ENCODE measurements at regions of chr16 and their contacts with region 1.

Region 1: DNA sequence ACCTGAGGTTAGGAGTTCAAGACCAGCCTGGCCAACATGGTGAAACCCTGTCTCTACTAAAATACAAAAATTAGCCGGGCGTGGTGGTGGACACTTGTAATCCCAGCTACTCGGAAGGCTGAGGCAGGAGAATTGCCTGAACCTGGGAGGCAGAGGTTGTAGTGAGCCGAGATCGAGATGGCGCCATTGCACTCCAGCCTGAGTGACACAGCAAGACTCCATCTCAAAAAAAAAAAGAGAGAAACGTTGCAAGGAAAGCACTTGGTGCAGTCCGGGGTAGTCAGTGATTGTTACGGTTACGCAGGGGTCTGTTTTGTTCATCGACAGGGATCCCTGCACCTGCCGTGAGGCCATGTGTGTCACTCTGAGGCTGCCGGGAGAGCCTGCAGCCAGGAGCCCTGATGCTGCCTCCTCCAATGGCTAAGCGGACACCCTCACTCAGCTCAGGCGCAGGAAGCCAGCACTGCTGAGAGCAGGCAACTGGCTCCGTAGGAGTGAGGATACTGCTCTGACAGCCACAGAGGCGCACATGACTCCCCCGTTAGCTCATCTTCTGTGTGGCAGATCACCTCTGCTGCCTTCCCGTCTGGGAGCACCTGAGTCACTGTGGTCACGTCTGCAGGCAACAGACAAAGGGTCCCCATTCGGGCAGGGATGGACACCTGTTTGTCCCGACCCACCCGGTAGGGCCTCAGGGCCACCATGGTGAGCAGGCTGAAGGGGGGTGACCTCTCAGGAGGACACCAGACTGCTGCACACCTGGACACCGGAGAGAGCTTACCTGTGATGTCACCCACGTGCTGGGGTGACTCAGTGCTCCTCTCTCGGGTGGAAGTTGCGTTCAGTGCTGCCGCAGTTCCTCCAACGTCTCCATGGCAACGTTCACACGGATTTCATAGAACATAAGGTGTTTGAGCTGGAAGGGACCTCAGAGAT is 5.2 kb upstream of the RAB26 start:
- DNase-seq: peak in 1 of 2 experiments; percentile 10
- H3K4me3 ChIP-seq: no peak overlapping the region
- H3K4me1 ChIP-seq: no peaks in the 10 kb centered on the region
- H3K27me3 ChIP-seq: no peaks in the 10 kb centered on the region

Region 2: GRCh38 chr16:2023098-2023925 is 119.9 kb before region 1 on chr16:
- in situ Hi-C with region 1: loop called (anchors 5 kb)
- DNase-seq: peak; percentile 74 to 95
- H3K4me3 ChIP-seq: peak overlapping the region; percentile 11
- H3K4me1 ChIP-seq: peaks cover 17% of the 10 kb centered on the region
- H3K27me3 ChIP-seq: peaks cover 10% of the 10 kb centered on the region; the same call in 1 of the 2 replicates

Region 3: GRCh38 chr16:2205104-2205966 is 62.1 kb after region 1 on chr16 and contains the start of gene MLST8:
- in situ Hi-C with region 1: no loop called
- DNase-seq: peak; percentile 72 to 82
- H3K4me3 ChIP-seq: peak within 1 kb of the TSS; percentile 100
- H3K4me1 ChIP-seq: peaks cover 8% of the 10 kb centered on the region
- H3K27me3 ChIP-seq: no peaks in the 10 kb centered on the region